ENCODE measurements at regions of chr10 and their contacts with region 1.

Region 1: GRCh38 chr10:61284222-61284890 is 168.8 kb downstream of the TMEM26 start:
- DNase-seq: no peak

Region 2: GRCh38 chr10:60816628-60817397 is 467.5 kb before region 1 on chr10:
- intact Hi-C with region 1: loop called (anchors 1 kb)
- DNase-seq: peak in 4 of 10 donors; percentile 25 to 52 (median 40)

Region 3: DNA sequence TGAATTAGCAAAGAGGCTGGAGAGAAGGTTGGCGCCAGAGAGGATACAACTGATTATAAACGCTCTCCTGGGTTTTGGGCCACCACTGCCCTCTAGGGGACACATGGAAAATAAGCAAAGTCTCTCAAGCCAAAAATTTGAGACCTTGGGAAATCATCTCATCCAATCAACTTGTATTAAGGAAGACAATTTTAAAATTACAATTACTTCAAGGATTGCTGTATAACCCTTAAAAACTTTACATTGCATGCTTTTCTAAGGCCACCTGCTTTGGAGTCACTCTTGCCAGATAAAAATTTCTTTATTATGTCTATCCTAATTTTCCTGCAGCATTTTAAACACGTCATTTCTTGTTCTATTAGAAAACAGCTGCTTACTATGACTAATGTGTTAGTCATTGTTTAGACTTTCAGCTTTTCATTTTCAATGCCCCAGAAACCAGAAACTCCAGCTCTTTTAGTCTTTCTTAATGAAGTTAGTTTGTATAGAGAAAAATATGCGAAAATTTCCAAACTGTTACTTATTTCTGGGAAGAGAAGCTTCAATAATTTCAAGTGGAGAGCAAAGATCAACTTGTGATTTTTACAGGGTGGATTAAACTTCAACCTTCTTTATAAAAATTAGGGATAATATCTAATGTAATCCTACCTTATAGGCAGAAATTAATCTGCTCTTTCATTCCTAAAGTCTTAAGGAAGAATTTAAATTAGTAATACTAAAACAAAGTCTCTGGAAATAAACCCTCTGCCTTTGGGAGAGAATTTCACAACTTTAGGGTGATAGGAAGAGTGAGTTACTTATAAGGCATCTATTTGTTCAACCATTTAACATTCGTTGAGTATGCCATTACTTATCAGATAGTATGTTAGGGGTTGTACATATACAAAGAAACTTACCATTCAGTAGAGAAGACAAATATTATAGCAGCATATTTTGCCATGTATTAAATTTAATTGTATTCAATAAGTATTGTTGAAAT is 319.8 kb before region 1 on chr10:
- intact Hi-C with region 1: loop called (anchors 10 kb)
- DNase-seq: peak in 9 of 10 donors; percentile 53 to 93 (median 68)

Region 4: GRCh38 chr10:61140765-61141392 is 143.5 kb before region 1 on chr10:
- intact Hi-C with region 1: loop called (anchors 2 kb)
- DNase-seq: peak in 4 of 10 donors; percentile 8 to 34 (median 21)